ENCODE measurements at regions of chr12 and their contacts with region 1.

Region 1: GRCh38 chr12:121008347-121009093 is 7.8 kb downstream of the C12orf43 start:
- DNase-seq: no peak
- ATAC-seq: no peak
- H3K4me3 ChIP-seq: no peak overlapping the region
- H3K4me3 Mint-ChIP-seq: no peak overlapping the region
- H3K27ac ChIP-seq: no peak overlapping the region
- H3K27ac Mint-ChIP-seq: no peak overlapping the region
- H3K4me1 ChIP-seq: no peaks in the 10 kb centered on the region
- H3K4me1 Mint-ChIP-seq: no peaks in the 10 kb centered on the region
- H3K27me3 ChIP-seq: no peaks in the 10 kb centered on the region
- H3K27me3 Mint-ChIP-seq: no peaks in the 10 kb centered on the region
- CTCF ChIP-seq: no peak

Region 2: DNA sequence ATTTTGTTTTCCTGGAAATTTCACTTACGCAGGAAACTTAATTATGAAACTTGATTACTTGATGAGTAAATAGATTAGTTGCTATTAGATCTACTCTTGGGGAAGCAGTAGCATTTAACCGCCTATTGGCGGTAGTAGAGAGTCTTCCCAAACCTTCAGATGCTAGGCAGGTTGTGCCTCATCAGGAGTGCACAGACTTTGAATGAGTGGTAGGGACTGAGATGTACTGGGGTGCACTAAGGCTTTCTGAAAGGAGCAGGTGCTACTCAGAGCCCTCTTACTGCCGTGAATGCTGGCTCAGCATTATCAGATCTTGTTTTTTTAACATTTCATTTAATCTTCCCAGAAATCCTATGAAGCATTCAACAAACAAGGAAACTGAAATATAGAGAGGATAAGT is 554.5 kb before region 1 on chr12:
- CTCF ChIA-PET with region 1: no interaction called
- POLR2A ChIA-PET with region 1: no interaction called
- intact Hi-C with region 1: no loop called
- DNase-seq: peak; percentile 47
- ATAC-seq: peak; percentile 76
- H3K4me3 ChIP-seq: no peak overlapping the region
- H3K4me3 Mint-ChIP-seq: no peak overlapping the region
- H3K27ac ChIP-seq: no peak overlapping the region
- H3K27ac Mint-ChIP-seq: no peak overlapping the region
- H3K4me1 ChIP-seq: peaks cover 0 to 4% of the 10 kb centered on the region in 2 donors
- H3K4me1 Mint-ChIP-seq: peaks cover 11% of the 10 kb centered on the region
- H3K27me3 ChIP-seq: no peaks in the 10 kb centered on the region
- H3K27me3 Mint-ChIP-seq: no peaks in the 10 kb centered on the region
- CTCF ChIP-seq: peak; percentile 81

Region 3: GRCh38 chr12:121021754-121022153 is 13.2 kb after region 1 on chr12:
- CTCF ChIA-PET with region 1: no interaction called
- POLR2A ChIA-PET with region 1: interaction called, 12 read pairs
- intact Hi-C with region 1: no loop called
- DNase-seq: no peak
- ATAC-seq: no peak
- H3K4me3 ChIP-seq: no peak overlapping the region
- H3K4me3 Mint-ChIP-seq: no peak overlapping the region
- H3K27ac ChIP-seq: no peak overlapping the region
- H3K27ac Mint-ChIP-seq: no peak overlapping the region
- H3K4me1 ChIP-seq: no peaks in the 10 kb centered on the region
- H3K4me1 Mint-ChIP-seq: no peaks in the 10 kb centered on the region
- H3K27me3 ChIP-seq: peaks cover 0 to 6% (median 0%) of the 10 kb centered on the region in 4 experiments
- H3K27me3 Mint-ChIP-seq: peaks cover 15% of the 10 kb centered on the region
- CTCF ChIP-seq: no peak

Measured in B cell (primary cell).